Tibial artery (tissue), 4 donors: ENCODE measurements at regions of chr17 and their contacts with region 1.

Region 1: DNA sequence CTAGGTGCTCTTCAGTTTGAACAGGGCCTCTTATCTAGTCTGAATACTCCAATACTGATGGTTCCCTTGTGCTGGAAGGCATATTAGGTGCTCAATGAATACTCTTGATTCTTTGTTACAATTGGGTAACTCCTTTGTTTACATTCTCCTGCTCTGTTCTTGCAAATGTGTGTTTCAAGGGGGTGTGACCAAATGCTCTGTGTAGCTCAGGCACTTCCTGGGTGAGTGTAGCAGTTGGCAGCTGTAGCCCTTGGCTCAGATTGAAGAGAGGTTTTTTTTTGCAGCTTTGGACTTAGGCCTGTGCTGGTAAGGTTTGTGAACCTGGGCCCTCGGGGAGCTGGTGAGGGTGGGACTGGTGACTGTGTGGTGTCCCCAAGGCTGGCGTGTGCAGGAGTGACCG is 20.2 kb downstream of the TBCD start:
- DNase-seq: no peak
- H3K4me3 ChIP-seq: no peak overlapping the region
- H3K27ac ChIP-seq: no peak overlapping the region
- H3K4me1 ChIP-seq: peaks cover 0 to 10% (median 2%) of the 10 kb centered on the region in 4 donors
- H3K27me3 ChIP-seq: no peaks in the 10 kb centered on the region
- CTCF ChIP-seq: no peak

Region 2: GRCh38 chr17:82351716-82352488 is 420.1 kb before region 1 on chr17:
- intact Hi-C with region 1: loop called (anchors 5 kb)
- DNase-seq: peak; percentile 85 to 89
- H3K4me3 ChIP-seq: no peak overlapping the region
- H3K27ac ChIP-seq: no peak overlapping the region
- H3K4me1 ChIP-seq: peaks cover 0 to 16% (median 8%) of the 10 kb centered on the region in 4 donors
- H3K27me3 ChIP-seq: peaks cover 0 to 59% of the 10 kb centered on the region in 2 donors
- CTCF ChIP-seq: peak; percentile 95 to 97

Region 3: GRCh38 chr17:82668631-82669099 is 103.4 kb before region 1 on chr17:
- intact Hi-C with region 1: loop called (anchors 2 kb)
- DNase-seq: peak in 1 of 2 donors; percentile 83
- H3K4me3 ChIP-seq: no peak overlapping the region
- H3K27ac ChIP-seq: peak overlapping the region in 1 of 2 donors; percentile 70
- H3K4me1 ChIP-seq: peaks cover 0 to 22% (median 3%) of the 10 kb centered on the region in 4 donors
- H3K27me3 ChIP-seq: no peaks in the 10 kb centered on the region
- CTCF ChIP-seq: peak; percentile 51 to 64